CD4-positive, alpha-beta T cell (primary cell): ENCODE measurements at regions of chr15 and their contacts with region 1.

Region 1: DNA sequence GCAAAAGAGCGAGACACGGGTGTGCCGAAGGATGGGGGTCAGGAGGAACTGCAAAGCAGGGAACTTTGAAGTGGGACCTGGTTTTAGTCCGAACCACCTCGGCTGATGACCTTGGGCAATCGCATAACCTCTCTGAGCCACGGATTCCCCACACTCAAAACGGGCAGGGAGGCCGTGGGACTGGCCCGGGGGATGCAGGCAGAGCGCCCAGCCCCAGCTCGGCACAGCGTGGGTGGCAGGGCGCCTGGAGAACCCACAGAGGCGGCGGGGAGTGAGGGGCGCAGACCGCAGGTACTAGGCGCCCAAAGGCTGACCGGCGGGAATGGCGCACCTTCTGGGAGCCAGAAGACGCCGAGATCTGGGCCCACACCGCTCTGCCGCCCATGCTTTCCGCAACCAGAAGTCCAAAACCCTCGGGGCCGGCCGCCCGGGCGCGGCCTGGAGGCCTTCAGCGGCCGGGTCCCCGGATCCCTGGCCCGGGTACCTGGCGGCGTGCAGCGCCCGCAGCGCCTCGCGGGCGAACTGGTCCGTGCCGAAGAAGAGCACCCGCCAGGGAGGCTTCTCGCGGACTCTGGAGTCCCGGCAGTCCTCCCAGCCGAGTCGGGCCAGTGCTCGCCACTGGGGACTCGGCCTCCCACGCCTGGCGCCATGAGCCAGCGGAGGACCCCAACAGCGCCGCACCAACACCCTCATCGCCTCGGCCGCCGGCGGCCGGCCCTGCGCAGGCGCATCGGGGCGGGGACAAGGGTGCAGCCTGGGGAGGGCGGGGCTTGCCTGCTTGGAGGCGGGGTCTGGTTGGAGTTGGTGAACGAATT is at the start of gene MTFMT:
- DNase-seq: peak; percentile 86 to 98 (median 92)
- ATAC-seq: peak; percentile 94
- H3K4me3 ChIP-seq: peak within 1 kb of the TSS; percentile 72
- H3K4me3 Mint-ChIP-seq: peak within 1 kb of the TSS; percentile 98
- H3K27ac ChIP-seq: peak within 1 kb of the TSS; percentile 29 to 37
- H3K27ac Mint-ChIP-seq: peak within 1 kb of the TSS; percentile 66
- H3K4me1 ChIP-seq: peaks cover 25% of the 10 kb centered on the region
- H3K4me1 Mint-ChIP-seq: peaks cover 25% of the 10 kb centered on the region
- H3K27me3 ChIP-seq: peaks cover 0 to 6% of the 10 kb centered on the region in 2 experiments
- H3K27me3 Mint-ChIP-seq: peaks cover 15% of the 10 kb centered on the region
- CTCF ChIP-seq: no peak
- total RNA-seq, gene MTFMT: 3.4 to 5.8 TPM

Region 2: GRCh38 chr15:64989416-64990167 is 39.5 kb before region 1 on chr15 and contains the start of gene SPG21:
- CTCF ChIA-PET with region 1: no interaction called
- POLR2A ChIA-PET with region 1: no interaction called
- intact Hi-C with region 1: loop called in 1 of 2 experiments (anchors 1 kb)
- DNase-seq: peak; percentile 71 to 96 (median 87)
- ATAC-seq: peak; percentile 88
- H3K4me3 ChIP-seq: peak within 1 kb of the TSS; percentile 97
- H3K4me3 Mint-ChIP-seq: peak within 1 kb of the TSS; percentile 91
- H3K27ac ChIP-seq: peak within 1 kb of the TSS; percentile 63 to 66
- H3K27ac Mint-ChIP-seq: peak within 1 kb of the TSS; percentile 87
- H3K4me1 ChIP-seq: peaks cover 29% of the 10 kb centered on the region
- H3K4me1 Mint-ChIP-seq: peaks cover 53% of the 10 kb centered on the region
- H3K27me3 ChIP-seq: no peaks in the 10 kb centered on the region
- H3K27me3 Mint-ChIP-seq: no peaks in the 10 kb centered on the region
- CTCF ChIP-seq: no peak
- total RNA-seq, gene SPG21: 29.4 to 32.7 TPM

Region 3: DNA sequence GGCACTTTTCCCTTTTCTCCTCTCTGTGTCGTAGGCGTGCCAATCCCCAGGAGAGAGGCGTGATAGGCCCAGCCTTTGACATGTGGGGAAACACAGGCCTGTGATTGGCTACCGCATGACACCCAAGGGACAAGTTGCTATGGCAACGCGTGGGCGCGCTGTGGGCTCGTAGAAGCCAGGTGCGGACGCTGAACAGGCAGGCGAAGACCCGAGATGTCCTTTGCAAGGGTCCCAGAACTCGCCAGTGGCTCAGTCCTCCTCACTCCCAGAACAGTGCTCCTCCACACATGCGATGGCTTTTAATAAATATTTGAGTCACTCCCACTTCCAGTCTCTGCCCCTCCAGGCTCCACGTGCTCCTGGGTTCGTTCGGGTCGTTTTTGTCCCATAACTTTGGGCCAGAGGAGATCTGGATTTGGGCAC is 20.3 kb after region 1 on chr15:
- CTCF ChIA-PET with region 1: no interaction called
- POLR2A ChIA-PET with region 1: no interaction called
- intact Hi-C with region 1: no loop called
- DNase-seq: peak; percentile 65 to 95 (median 78)
- ATAC-seq: peak; percentile 99
- H3K4me3 ChIP-seq: peak overlapping the region; percentile 45
- H3K4me3 Mint-ChIP-seq: peak overlapping the region; percentile 60
- H3K27ac ChIP-seq: no peak overlapping the region
- H3K27ac Mint-ChIP-seq: no peak overlapping the region
- H3K4me1 ChIP-seq: peaks cover 11% of the 10 kb centered on the region
- H3K4me1 Mint-ChIP-seq: peaks cover 13% of the 10 kb centered on the region
- H3K27me3 ChIP-seq: peaks cover 0 to 6% of the 10 kb centered on the region in 2 experiments
- H3K27me3 Mint-ChIP-seq: no peaks in the 10 kb centered on the region
- CTCF ChIP-seq: no peak

Region 4: GRCh38 chr15:65077981-65078352 is 48.8 kb after region 1 on chr15:
- CTCF ChIA-PET with region 1: interaction called, 3 read pairs
- POLR2A ChIA-PET with region 1: interaction called, 3 read pairs
- intact Hi-C with region 1: loop called (anchors 2 to 5 kb)
- DNase-seq: peak in 13 of 14 experiments; percentile 27 to 70 (median 44)
- ATAC-seq: peak; percentile 69
- H3K4me3 ChIP-seq: no peak overlapping the region
- H3K4me3 Mint-ChIP-seq: no peak overlapping the region
- H3K27ac ChIP-seq: no peak overlapping the region
- H3K27ac Mint-ChIP-seq: no peak overlapping the region
- H3K4me1 ChIP-seq: peaks cover 17% of the 10 kb centered on the region
- H3K4me1 Mint-ChIP-seq: peaks cover 10% of the 10 kb centered on the region
- H3K27me3 ChIP-seq: peaks cover 5 to 7% of the 10 kb centered on the region in 2 experiments
- H3K27me3 Mint-ChIP-seq: peaks cover 40% of the 10 kb centered on the region
- CTCF ChIP-seq: peak; percentile 42

Region 5: GRCh38 chr15:65184868-65185738 is 156.0 kb after region 1 on chr15 and contains the start of gene CLPX:
- CTCF ChIA-PET with region 1: no interaction called
- POLR2A ChIA-PET with region 1: no interaction called
- intact Hi-C with region 1: loop called in 1 of 2 experiments (anchors 5 kb)
- DNase-seq: peak; percentile 84 to 99 (median 90)
- ATAC-seq: peak; percentile 97
- H3K4me3 ChIP-seq: peak within 1 kb of the TSS; percentile 91
- H3K4me3 Mint-ChIP-seq: peak within 1 kb of the TSS; percentile 94
- H3K27ac ChIP-seq: peak within 1 kb of the TSS; percentile 82 to 86
- H3K27ac Mint-ChIP-seq: peak within 1 kb of the TSS; percentile 85
- H3K4me1 ChIP-seq: peaks cover 29% of the 10 kb centered on the region
- H3K4me1 Mint-ChIP-seq: peaks cover 33% of the 10 kb centered on the region
- H3K27me3 ChIP-seq: no peaks in the 10 kb centered on the region
- H3K27me3 Mint-ChIP-seq: no peaks in the 10 kb centered on the region
- CTCF ChIP-seq: no peak
- total RNA-seq, gene CLPX: 29.1 to 36.3 TPM